A673 (cell line): ENCODE measurements at regions of chr2 and their contacts with region 1.

Region 1: DNA sequence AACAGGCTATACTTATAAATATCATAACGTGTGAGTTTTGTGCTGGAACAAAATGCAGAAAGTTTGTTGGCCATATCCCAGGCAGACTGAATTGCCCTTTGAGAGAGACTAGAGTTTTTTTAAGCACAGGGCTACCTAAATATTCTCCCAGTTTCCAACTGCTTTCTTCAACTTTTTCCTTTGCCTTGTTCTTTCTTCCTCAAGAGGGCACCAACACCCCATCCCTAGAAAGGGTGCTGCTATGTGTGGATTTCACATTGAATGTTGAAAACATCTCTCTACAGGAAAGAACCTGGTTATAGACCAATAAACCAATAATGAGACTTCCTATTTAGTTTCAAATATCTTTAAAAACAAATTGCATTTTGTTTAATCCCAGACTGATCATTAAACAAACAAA is 87.9 kb downstream of the ICOS start:
- DNase-seq: peak; percentile 76
- H3K4me3 ChIP-seq: no peak overlapping the region
- H3K27ac ChIP-seq: no peak overlapping the region
- H3K4me1 ChIP-seq: peaks cover 21% of the 10 kb centered on the region
- H3K27me3 ChIP-seq: no peaks in the 10 kb centered on the region
- CTCF ChIP-seq: peak; percentile 76

Region 2: GRCh38 chr2:203914546-203915182 is 109.8 kb before region 1 on chr2:
- CTCF ChIA-PET with region 1: no interaction called
- POLR2A ChIA-PET with region 1: no interaction called
- intact Hi-C with region 1: no loop called
- DNase-seq: no peak
- H3K4me3 ChIP-seq: no peak overlapping the region
- H3K27ac ChIP-seq: no peak overlapping the region
- H3K4me1 ChIP-seq: no peaks in the 10 kb centered on the region
- H3K27me3 ChIP-seq: no peaks in the 10 kb centered on the region
- CTCF ChIP-seq: no peak

Region 3: DNA sequence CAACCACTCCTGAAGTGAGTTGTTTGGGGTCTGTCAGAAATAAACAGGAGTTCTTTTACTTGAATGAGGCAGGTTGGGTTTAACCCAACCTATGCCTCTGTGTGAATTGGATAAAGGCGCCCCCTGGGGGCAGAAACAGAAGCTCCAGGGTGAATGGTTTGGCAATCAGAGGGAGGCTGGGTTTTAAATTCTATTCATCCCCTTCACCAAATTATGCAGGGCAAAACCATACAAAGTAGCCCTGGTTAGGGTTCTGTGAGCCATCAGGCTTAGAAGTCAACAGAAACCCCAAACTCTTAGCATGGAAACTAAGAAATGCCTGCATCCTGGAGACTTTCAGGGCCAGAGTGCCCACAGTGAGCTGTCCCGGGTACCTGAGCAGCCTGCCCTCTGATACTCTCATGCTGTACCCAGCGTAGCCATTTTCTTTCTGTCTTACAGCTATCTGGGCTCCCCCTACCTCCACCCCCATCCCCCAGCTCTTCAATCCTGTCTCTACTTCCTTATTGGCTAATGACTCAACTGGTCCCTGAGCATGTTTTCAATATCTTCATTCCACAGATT is 153.6 kb after region 1 on chr2:
- CTCF ChIA-PET with region 1: interaction called, 23 read pairs
- POLR2A ChIA-PET with region 1: no interaction called
- intact Hi-C with region 1: loop called (anchors 5 kb)
- DNase-seq: peak; percentile 72
- H3K4me3 ChIP-seq: no peak overlapping the region
- H3K27ac ChIP-seq: peak overlapping the region; percentile 82
- H3K4me1 ChIP-seq: peaks cover 28% of the 10 kb centered on the region
- H3K27me3 ChIP-seq: no peaks in the 10 kb centered on the region
- CTCF ChIP-seq: peak; percentile 81

Region 4: GRCh38 chr2:204407204-204408070 is 382.9 kb after region 1 on chr2:
- CTCF ChIA-PET with region 1: no interaction called
- POLR2A ChIA-PET with region 1: no interaction called
- intact Hi-C with region 1: no loop called
- DNase-seq: no peak
- H3K4me3 ChIP-seq: no peak overlapping the region
- H3K27ac ChIP-seq: no peak overlapping the region
- H3K4me1 ChIP-seq: no peaks in the 10 kb centered on the region
- H3K27me3 ChIP-seq: no peaks in the 10 kb centered on the region
- CTCF ChIP-seq: no peak

Region 5: GRCh38 chr2:204691911-204692510 is 667.5 kb after region 1 on chr2:
- CTCF ChIA-PET with region 1: no interaction called
- POLR2A ChIA-PET with region 1: no interaction called
- intact Hi-C with region 1: loop called (anchors 10 kb)
- DNase-seq: peak; percentile 78
- H3K4me3 ChIP-seq: no peak overlapping the region
- H3K27ac ChIP-seq: no peak overlapping the region
- H3K4me1 ChIP-seq: peaks cover 10% of the 10 kb centered on the region
- H3K27me3 ChIP-seq: no peaks in the 10 kb centered on the region
- CTCF ChIP-seq: peak; percentile 80